ENCODE measurements at regions of chr7 and their contacts with region 1.

Region 1: GRCh38 chr7:17769918-17770317 is 170.4 kb downstream of the SNX13 start:
- DNase-seq: peak; percentile 86
- H3K4me3 Mint-ChIP-seq: no peak overlapping the region
- H3K27ac Mint-ChIP-seq: no peak overlapping the region
- H3K4me1 Mint-ChIP-seq: peaks cover 33% of the 10 kb centered on the region
- H3K27me3 Mint-ChIP-seq: no peaks in the 10 kb centered on the region
- CTCF ChIP-seq: peak; percentile 84

Region 2: DNA sequence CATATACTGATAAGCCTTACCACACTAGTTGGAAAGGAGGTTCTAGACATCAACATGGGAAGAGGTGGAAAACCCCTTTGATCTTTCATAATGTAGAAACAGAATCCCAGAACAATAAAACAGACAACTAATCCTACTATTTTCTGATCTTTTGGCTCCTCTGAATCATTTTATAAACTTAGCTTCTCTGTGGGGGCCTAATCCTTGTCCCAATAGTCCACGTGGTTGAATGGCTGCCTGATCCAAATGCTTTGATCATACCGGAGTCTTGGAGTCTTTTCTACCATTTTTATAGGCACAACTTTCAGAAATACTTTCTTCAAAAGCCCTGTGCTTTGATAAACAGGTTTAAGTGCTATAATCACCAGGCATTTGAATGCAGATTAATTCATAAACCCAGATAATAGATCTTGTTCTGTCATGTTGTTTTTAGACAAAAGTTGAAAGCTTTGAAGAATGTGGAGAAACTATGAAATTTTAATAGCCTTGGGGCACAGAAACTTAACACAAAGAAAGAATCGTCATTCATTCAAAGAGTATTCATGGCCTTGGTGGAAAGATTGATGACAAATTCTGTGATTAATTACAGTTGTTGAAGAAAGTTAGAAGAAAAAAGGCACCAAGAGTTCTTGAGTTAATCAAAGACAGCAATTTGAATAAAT is 307.8 kb before region 1 on chr7:
- CTCF ChIA-PET with region 1: no interaction called
- intact Hi-C with region 1: no loop called
- DNase-seq: no peak
- H3K4me3 Mint-ChIP-seq: no peak overlapping the region
- H3K27ac Mint-ChIP-seq: no peak overlapping the region
- H3K4me1 Mint-ChIP-seq: peaks cover 6% of the 10 kb centered on the region
- H3K27me3 Mint-ChIP-seq: no peaks in the 10 kb centered on the region
- CTCF ChIP-seq: no peak

Region 3: GRCh38 chr7:17706734-17707133 is 63.2 kb before region 1 on chr7:
- CTCF ChIA-PET with region 1: interaction called, 23 read pairs
- intact Hi-C with region 1: no loop called
- DNase-seq: peak; percentile 75
- H3K4me3 Mint-ChIP-seq: no peak overlapping the region
- H3K27ac Mint-ChIP-seq: no peak overlapping the region
- H3K4me1 Mint-ChIP-seq: no peaks in the 10 kb centered on the region
- H3K27me3 Mint-ChIP-seq: no peaks in the 10 kb centered on the region
- CTCF ChIP-seq: peak; percentile 84

Region 4: GRCh38 chr7:17939606-17940301 is 169.8 kb after region 1 on chr7:
- CTCF ChIA-PET with region 1: interaction called, 8 read pairs
- intact Hi-C with region 1: loop called (anchors 2 kb)
- DNase-seq: peak; percentile 63
- H3K4me3 Mint-ChIP-seq: peak overlapping the region; percentile 95
- H3K27ac Mint-ChIP-seq: peak overlapping the region; percentile 94
- H3K4me1 Mint-ChIP-seq: peaks cover 39% of the 10 kb centered on the region
- H3K27me3 Mint-ChIP-seq: no peaks in the 10 kb centered on the region
- CTCF ChIP-seq: no peak

Region 5: GRCh38 chr7:18119985-18120384 is 350.1 kb after region 1 on chr7:
- CTCF ChIA-PET with region 1: interaction called, 5 read pairs
- intact Hi-C with region 1: loop called (anchors 1 kb)
- DNase-seq: peak; percentile 50
- H3K4me3 Mint-ChIP-seq: no peak overlapping the region
- H3K27ac Mint-ChIP-seq: no peak overlapping the region
- H3K4me1 Mint-ChIP-seq: peaks cover 13% of the 10 kb centered on the region
- H3K27me3 Mint-ChIP-seq: no peaks in the 10 kb centered on the region
- CTCF ChIP-seq: peak; percentile 43

Measured in Calu3 (cell line).